Heart right ventricle (tissue), 16 donors: ENCODE measurements at regions of chr17 and their contacts with region 1.

Region 1: DNA sequence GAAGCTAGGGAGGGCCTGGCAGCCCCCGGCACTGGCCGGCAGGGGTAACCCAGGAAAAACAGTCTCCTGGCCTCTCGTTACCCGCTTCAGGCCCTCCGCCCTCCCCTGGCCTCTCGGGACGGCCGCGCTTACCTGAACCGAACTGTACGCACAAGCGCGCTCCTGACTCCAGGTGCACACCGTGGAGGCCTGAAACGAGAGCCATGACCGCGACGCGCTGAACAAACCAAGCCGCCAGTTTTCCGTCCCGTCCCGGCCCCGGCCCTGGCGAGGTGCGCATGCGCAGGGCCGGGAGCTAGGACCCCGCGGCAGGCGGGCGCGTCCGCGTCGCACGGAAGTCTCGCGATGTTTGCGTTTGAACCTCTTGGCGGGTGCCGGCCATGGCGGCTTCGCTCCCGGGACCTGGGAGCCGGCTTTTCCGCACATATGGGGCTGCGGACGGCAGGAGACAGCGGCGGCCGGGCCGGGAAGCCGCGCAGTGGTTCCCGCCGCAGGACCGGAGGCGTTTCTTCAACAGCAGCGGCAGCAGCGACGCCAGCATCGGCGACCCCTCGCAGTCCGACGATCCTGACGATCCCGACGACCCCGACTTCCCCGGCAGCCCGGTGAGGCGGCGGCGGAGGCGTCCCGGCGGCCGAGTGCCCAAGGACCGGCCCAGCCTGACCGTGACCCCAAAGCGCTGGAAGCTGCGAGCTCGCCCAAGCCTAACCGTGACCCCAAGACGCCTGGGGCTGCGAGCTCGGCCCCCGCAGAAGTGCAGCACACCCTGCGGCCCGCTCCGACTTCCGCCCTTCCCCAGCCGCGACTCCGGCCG is at the start of gene HASPIN:
- DNase-seq: peak; percentile 90 to 94
- ATAC-seq: peak; percentile 94 to 98 (median 96)
- H3K4me3 ChIP-seq: peak within 1 kb of the TSS; percentile 62 to 92 (median 72)
- H3K27ac ChIP-seq: peak within 1 kb of the TSS; percentile 42 to 97 (median 88)
- H3K4me1 ChIP-seq: peaks cover 10 to 49% (median 30%) of the 10 kb centered on the region in 9 donors
- H3K27me3 ChIP-seq: no peaks in the 10 kb centered on the region
- CTCF ChIP-seq: peak in 5 of 9 donors; percentile 21 to 36 (median 33)
- total RNA-seq, gene HASPIN: 0.12 to 1.5 (median 0.23) TPM

Region 2: GRCh38 chr17:3659541-3660111 is 64.1 kb before region 1 on chr17:
- intact Hi-C with region 1: no loop called
- DNase-seq: peak; percentile 56 to 77
- ATAC-seq: peak; percentile 44 to 76 (median 58)
- H3K4me3 ChIP-seq: no peak overlapping the region
- H3K27ac ChIP-seq: peak overlapping the region; percentile 78 to 88 (median 82)
- H3K4me1 ChIP-seq: peaks cover 21 to 40% (median 30%) of the 10 kb centered on the region in 9 donors
- H3K27me3 ChIP-seq: no peaks in the 10 kb centered on the region
- CTCF ChIP-seq: peak in 2 of 9 donors; percentile 10 to 24

Region 3: DNA sequence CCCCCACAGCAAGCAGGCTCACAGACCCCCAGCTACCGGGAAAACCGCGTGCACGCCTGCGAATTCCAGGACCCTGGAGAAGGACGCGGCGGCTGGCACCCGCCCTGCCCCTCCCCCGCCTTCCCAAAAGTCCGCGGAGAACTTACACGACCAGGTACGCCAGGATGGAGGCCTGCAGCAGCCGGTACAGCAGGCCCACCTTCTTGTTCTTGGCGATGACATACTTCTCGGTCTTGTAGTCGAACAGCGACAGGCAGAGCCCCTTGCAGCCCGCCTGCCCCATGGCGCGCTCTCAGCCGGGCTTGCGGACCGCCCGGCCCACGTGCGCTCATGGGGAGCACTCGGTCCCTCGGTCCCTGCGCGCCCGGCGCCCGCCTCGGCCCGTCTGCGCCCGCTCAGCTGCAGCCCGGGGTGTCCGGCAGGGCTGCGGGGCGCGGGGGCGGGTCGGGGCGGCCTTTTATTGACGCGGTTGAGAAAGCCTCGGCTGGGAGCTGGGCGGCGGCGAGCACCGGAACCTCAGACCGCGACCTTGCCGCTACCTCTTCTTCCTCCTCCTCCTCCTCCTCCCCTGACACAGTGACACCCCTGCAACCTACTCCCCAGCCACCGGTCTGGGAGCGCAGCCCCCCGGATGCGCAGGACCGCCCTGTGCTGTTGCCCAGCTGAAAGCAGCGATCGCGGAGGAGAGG is 27.9 kb before region 1 on chr17 and contains the start of gene P2RX5:
- intact Hi-C with region 1: loop called in 1 of 10 experiments (anchors 2 kb)
- DNase-seq: no peak
- ATAC-seq: peak; percentile 41 to 63 (median 52)
- H3K4me3 ChIP-seq: peak within 1 kb of the TSS; percentile 32 to 62 (median 54)
- H3K27ac ChIP-seq: peak within 1 kb of the TSS in 9 of 10 donors; percentile 39 to 90 (median 80)
- H3K4me1 ChIP-seq: peaks cover 0 to 26% (median 18%) of the 10 kb centered on the region in 9 donors
- H3K27me3 ChIP-seq: peaks cover 0 to 43% (median 24%) of the 10 kb centered on the region in 7 donors
- CTCF ChIP-seq: no peak
- total RNA-seq, gene P2RX5: 6.0 to 24.5 (median 11.9) TPM

Region 4: DNA sequence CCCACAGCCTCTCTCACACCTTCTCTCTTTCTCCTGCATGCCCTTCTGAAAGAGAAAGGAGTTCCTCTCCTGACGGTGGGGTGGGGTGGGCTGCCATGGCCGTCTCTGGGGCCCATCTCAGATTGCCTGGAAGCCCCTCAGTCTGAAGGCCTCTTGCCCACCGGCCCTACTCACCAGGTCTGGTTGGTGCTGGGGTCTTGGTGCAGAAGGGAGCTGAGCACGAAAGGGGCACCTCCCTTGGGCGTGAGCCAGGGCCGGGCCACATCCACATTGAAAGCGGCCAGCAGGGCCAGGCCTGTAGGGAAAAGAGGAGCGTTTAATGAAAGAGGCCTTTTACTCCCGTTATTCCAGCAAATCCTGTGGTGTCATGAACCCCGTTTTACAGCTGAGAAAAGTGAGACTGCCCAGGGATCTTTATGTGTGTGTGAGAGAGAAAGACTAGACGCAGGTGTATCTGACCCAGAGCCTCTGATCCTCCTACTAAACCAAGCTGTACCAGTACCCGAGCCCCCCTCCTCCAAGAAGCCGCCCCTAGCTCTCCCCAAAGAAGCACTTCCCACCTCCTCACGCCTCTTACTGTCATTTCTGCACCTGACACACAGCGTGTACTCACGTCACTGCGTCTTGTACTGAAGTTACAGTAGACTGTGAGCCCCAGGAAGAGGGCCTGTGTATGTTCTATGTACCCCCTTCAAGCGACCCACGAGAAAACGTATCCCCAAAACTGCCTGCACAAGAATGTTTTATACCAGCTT is 53.8 kb after region 1 on chr17:
- intact Hi-C with region 1: no loop called
- DNase-seq: no peak
- ATAC-seq: no peak
- H3K4me3 ChIP-seq: no peak overlapping the region
- H3K27ac ChIP-seq: no peak overlapping the region
- H3K4me1 ChIP-seq: no peaks in the 10 kb centered on the region
- H3K27me3 ChIP-seq: peaks cover 0 to 4% (median 0%) of the 10 kb centered on the region in 7 donors
- CTCF ChIP-seq: no peak